ENCODE measurements at regions of chr9 and their contacts with region 1.

Region 1: GRCh38 chr9:90441814-90442213 is 200.8 kb downstream of the DIRAS2 start:
- DNase-seq: peak; percentile 81

Region 2: DNA sequence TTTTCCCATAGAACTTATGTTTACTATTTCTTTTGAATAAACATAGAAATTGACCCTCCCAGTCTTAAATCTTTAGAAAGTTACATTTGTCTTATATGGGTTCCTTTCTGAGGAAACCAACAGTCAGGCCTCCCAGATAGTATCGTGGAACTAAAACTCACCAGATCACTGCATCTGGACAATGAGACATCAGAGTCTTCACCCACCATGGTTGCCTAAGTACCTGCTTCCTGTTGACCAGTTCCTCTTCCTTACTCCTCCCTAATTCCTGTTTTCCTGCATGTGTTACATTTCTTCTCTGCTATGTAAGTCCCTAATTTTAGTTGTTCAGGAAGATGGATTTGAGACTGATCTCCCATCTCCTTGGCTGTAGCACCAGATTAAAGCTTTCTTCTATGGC is 261.4 kb before region 1 on chr9:
- in situ Hi-C with region 1: no loop called
- DNase-seq: no peak

Region 3: DNA sequence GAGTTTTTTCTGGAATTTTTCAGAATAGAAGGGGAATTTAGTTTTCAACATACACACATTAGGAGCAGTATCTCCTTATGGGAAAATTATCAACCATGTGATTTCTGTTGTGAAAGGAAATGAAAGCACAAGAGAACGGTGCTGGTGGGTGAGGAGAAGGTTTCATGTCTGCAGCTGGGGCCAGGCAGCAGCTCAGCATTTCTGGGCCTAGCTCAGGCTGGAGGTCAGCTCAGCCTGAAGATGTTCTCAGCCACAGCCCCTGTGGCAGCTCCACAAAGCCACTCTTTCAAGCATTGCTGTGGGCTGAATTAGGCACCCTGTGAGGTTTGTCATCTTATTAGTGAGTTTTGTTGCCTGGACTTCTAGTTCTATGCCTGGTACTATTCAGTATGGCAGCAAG is 110.5 kb after region 1 on chr9:
- in situ Hi-C with region 1: loop called (anchors 10 kb)
- DNase-seq: no peak

Region 4: DNA sequence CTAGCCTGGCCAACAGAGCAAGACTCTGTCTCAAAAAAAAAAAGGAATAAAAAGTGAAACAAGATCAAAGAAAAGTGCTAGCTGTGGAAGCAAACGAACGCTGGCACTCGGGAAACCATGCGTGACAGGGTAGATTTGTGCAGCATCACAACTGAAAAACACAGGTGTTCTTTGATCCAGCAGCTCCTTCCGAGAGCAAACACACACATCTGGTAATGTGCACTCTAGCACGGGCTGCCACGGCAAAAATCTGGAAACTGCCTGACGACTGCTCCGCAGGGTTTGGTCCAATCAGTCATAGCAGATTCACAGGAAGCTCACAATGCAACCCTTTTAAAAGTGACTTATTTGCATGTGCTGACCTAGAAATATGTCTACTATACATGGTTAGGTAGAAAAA is 439.8 kb after region 1 on chr9:
- in situ Hi-C with region 1: no loop called
- DNase-seq: no peak

Measured in Caki2 (cell line).